ENCODE measurements at regions of chr12 and their contacts with region 1.

Region 1: GRCh38 chr12:6062757-6063735 is 61.4 kb downstream of the VWF start:
- DNase-seq: no peak
- ATAC-seq: peak; percentile 56 to 61

Region 2: GRCh38 chr12:5648692-5649359 is 414.2 kb before region 1 on chr12:
- intact Hi-C with region 1: no loop called
- DNase-seq: no peak
- ATAC-seq: peak in 1 of 2 donors; percentile 67

Region 3: GRCh38 chr12:5872735-5873134 is 190.3 kb before region 1 on chr12:
- intact Hi-C with region 1: no loop called
- DNase-seq: no peak
- ATAC-seq: no peak

Region 4: GRCh38 chr12:6278439-6279255 is 215.6 kb after region 1 on chr12:
- intact Hi-C with region 1: loop called in 1 of 2 experiments (anchors 5 kb)
- DNase-seq: peak; percentile 92
- ATAC-seq: peak; percentile 94 to 96

Region 5: DNA sequence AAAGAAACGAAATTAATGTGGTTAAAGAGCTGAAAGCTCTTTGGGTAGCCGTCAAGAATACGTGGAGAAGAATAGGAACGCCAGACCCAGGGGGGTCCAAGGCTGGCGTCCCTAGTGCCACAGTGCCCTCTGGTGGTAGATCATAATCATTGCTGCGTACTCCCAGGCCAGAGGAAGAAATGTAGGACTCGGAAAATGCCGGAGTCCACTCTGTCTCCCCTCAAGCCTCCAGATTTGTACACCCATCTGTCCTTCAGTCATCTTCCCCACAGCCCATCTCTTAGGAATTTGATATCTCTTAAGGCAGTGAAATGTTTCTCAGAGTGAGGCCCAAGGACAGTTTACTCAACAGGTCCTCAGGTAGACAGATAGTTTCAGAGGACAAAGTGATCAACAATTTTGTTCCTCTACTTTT is 222.0 kb after region 1 on chr12:
- intact Hi-C with region 1: loop called (anchors 1 to 5 kb)
- DNase-seq: no peak
- ATAC-seq: peak; percentile 77 to 95

Measured in left cardiac atrium (tissue), 4 donors.